ENCODE measurements at regions of chr19 and their contacts with region 1.

Region 1: GRCh38 chr19:5690125-5690954 is at the start of gene RPL36:
- DNase-seq: peak; percentile 81
- H3K4me3 ChIP-seq: peak within 1 kb of the TSS; percentile 78
- H3K27me3 ChIP-seq: no peaks in the 10 kb centered on the region
- CTCF ChIP-seq: peak; percentile 99
- polyA plus RNA-seq, gene RPL36: 824 and 912 TPM in 2 replicates

Region 2: GRCh38 chr19:5676105-5676771 is 14.1 kb before region 1 on chr19:
- CTCF ChIA-PET with region 1: interaction called, 11 read pairs
- POLR2A ChIA-PET with region 1: no interaction called
- DNase-seq: no peak
- H3K4me3 ChIP-seq: no peak overlapping the region
- H3K27me3 ChIP-seq: no peaks in the 10 kb centered on the region
- CTCF ChIP-seq: no peak

Region 3: DNA sequence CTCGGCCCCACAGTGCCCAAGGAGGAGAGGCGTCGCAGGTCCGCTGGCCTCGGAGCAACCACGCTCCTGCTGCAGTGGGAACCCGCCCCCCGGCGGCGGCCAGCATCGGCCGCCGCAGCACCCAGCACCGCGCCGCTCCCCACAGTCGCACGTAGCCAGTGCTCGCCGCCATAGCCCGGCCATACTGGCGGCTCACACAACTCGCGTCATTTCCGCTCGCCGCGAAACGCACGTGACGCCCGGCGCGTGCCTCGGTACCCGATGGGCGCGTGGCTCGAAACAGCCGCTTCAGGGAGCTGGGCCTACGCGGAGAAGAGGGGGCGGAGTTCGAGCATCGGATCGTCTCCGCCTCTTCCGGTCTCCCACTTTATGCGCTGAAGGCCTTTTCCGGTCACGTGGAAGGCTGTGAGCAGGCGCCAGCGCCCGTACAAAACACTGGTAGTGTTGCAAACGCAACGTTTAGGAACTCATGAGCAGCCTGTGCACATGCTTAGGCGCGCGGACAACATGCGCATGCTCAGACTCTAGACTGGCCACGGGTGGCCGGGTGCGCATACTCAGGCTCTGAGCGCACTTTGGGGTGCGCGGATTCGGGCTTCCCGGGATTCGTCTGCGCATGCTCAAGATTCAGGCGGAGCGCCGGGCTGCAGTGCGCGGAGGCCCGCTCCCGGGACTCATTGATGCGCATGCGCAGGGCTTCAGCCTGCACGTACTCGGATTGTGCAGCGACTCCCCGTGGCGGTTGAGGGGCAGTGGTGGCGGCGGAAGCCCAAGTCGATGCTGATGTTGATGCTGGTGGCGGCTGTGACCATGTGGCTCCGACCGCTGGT is 29.8 kb after region 1 on chr19 and contains the starts of genes CATSPERD and LONP1:
- CTCF ChIA-PET with region 1: interaction called, 12 read pairs
- POLR2A ChIA-PET with region 1: interaction called, 7 read pairs
- DNase-seq: peak; percentile 89
- H3K4me3 ChIP-seq: peak within 1 kb of the TSS; percentile 94
- H3K27me3 ChIP-seq: no peaks in the 10 kb centered on the region
- CTCF ChIP-seq: peak; percentile 97
- polyA plus RNA-seq, gene CATSPERD: not detected in 2 replicates
- polyA plus RNA-seq, gene LONP1: 55.4 and 77.4 TPM in 2 replicates

Measured in BJ (cell line).